MCF 10A (cell line): ENCODE measurements at regions of chr12 and their contacts with region 1.

Region 1: GRCh38 chr12:78470354-78471195 is 394.0 kb upstream of the SYT1 start:
- DNase-seq: peak; percentile 62
- H3K4me3 Mint-ChIP-seq: no peak overlapping the region
- H3K27ac Mint-ChIP-seq: no peak overlapping the region
- H3K4me1 Mint-ChIP-seq: peaks cover 8% of the 10 kb centered on the region
- H3K27me3 Mint-ChIP-seq: no peaks in the 10 kb centered on the region
- CTCF ChIP-seq: peak; percentile 54

Region 2: GRCh38 chr12:78181544-78182162 is 288.9 kb before region 1 on chr12:
- CTCF ChIA-PET with region 1: interaction called, 15 read pairs
- POLR2A ChIA-PET with region 1: no interaction called
- intact Hi-C with region 1: loop called (anchors 1 kb)
- DNase-seq: peak; percentile 52
- H3K4me3 Mint-ChIP-seq: no peak overlapping the region
- H3K27ac Mint-ChIP-seq: no peak overlapping the region
- H3K4me1 Mint-ChIP-seq: peaks cover 7% of the 10 kb centered on the region
- H3K27me3 Mint-ChIP-seq: no peaks in the 10 kb centered on the region
- CTCF ChIP-seq: peak; percentile 75

Region 3: DNA sequence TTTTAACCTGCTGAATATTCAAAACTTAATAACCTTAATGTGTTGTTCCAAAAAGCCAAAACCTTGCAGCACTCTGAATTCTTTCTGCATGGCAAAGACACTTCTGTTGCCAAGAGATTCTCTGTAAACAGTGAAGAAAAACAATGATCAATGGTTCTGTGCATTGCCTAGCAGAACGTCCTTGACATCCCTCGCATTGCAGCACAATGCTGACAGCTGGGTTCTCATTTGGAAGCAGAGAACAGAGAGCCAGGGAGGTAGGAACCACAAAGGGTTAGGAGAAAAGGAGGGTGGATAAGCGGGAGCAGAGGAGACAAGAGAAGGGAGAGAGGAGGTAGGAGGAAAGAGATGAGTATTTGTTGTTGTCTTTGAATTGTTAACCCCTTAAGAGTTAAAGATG is 138.8 kb before region 1 on chr12:
- CTCF ChIA-PET with region 1: no interaction called
- POLR2A ChIA-PET with region 1: no interaction called
- intact Hi-C with region 1: no loop called
- DNase-seq: no peak
- H3K4me3 Mint-ChIP-seq: no peak overlapping the region
- H3K27ac Mint-ChIP-seq: no peak overlapping the region
- H3K4me1 Mint-ChIP-seq: no peaks in the 10 kb centered on the region
- H3K27me3 Mint-ChIP-seq: no peaks in the 10 kb centered on the region
- CTCF ChIP-seq: no peak

Region 4: DNA sequence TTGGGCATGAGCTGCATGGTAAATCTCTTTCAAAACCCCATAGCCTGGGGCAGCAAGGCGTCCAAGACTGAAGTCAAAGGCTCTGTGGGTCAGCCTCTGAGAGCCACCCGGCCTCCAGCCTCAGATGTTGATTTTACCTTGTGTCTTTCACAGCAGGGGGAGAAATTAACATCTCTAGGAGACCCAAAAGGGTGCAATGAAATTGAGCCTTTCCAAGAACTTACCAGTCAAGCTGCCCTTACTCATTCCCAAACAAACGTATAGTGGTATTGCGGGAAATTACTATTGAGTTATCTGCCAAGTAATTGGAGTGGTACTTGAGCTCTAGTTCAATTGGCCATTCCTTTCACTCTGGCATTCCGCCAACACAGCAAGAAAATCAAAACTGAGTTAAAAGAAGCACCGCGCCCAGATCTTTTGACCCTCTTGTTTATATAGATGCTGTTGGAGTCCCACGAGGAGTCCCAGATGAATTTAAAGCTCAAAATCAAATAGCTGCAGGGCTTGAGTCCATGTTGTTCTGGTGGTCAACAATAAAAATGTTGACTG is 13.3 kb after region 1 on chr12:
- CTCF ChIA-PET with region 1: interaction called, 12 read pairs
- POLR2A ChIA-PET with region 1: no interaction called
- intact Hi-C with region 1: no loop called
- DNase-seq: no peak
- H3K4me3 Mint-ChIP-seq: no peak overlapping the region
- H3K27ac Mint-ChIP-seq: no peak overlapping the region
- H3K4me1 Mint-ChIP-seq: no peaks in the 10 kb centered on the region
- H3K27me3 Mint-ChIP-seq: no peaks in the 10 kb centered on the region
- CTCF ChIP-seq: no peak

Region 5: GRCh38 chr12:78863482-78864402 is 393.2 kb after region 1 on chr12:
- CTCF ChIA-PET with region 1: interaction called, 5 read pairs
- POLR2A ChIA-PET with region 1: no interaction called
- intact Hi-C with region 1: loop called (anchors 1 kb)
- DNase-seq: peak; percentile 72
- H3K4me3 Mint-ChIP-seq: peak overlapping the region; percentile 96
- H3K27ac Mint-ChIP-seq: peak overlapping the region; percentile 85
- H3K4me1 Mint-ChIP-seq: peaks cover 8% of the 10 kb centered on the region
- H3K27me3 Mint-ChIP-seq: no peaks in the 10 kb centered on the region
- CTCF ChIP-seq: no peak

Region 6: DNA sequence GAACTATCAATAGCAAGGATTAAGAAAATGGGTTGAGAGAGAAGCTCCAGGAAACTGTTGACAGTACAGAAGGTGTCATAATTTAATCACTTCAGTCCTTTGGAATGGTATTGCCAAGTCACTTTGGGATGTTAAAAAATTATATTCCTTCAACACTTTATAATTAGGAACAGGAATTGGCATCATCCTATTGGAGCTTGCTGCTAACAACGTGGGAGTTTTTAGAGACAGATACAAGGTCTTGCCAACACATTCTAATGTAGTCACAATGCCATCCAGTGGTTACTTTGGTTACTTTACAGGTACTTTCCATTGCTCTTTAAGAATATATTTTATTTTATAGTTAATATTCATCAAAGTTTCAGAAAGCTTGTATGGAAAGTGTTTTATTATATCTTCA is 704.1 kb after region 1 on chr12:
- CTCF ChIA-PET with region 1: interaction called, 53 read pairs
- POLR2A ChIA-PET with region 1: no interaction called
- intact Hi-C with region 1: loop called (anchors 1 kb)
- DNase-seq: peak; percentile 50
- H3K4me3 Mint-ChIP-seq: no peak overlapping the region
- H3K27ac Mint-ChIP-seq: no peak overlapping the region
- H3K4me1 Mint-ChIP-seq: no peaks in the 10 kb centered on the region
- H3K27me3 Mint-ChIP-seq: no peaks in the 10 kb centered on the region
- CTCF ChIP-seq: peak; percentile 49